ENCODE measurements at regions of chr10 and their contacts with region 1.

Region 1: DNA sequence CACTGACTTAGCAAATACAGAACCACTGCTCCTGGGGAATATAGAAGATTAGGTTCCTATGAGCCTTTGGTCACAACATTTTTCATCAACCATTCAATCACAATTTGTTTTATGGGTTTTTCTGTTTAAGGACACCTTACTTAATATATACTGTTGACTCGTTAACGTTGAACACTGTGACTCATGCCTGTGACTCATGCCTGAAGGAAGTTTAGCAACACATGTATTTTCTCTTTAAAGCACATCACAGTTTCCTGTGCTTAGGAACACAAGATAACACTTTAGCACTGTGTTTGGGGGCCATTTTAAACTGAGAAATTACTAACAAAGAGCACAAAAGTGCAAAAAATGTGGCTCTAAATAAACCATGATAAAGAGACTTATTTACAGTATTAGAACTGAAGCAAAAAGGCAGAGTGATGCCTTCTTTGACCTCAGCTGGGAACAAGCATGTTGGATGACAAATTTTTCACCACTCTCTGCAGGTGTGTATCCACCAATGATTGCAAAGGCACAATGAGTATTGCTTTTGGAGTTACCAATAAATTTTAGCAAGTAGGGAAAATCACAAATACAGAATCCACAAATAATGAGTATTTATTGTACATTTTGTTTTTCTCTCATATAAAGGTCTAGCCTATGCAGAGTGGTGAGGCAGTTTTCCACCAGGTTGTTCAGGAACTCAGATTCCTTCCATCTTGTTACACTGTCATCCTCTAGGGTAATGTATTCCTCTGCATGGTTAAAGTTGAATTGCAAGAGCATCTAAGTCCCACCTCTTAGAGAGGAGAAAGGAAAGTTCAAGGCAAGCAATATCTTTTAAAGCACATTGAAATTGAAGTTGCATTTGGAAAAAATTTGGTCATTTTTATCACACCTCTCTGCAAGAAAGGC is 7.3 kb downstream of the FGFBP3 start:
- DNase-seq: peak in 1 of 9 donors; percentile 15
- ATAC-seq: peak; percentile 98
- H3K4me3 ChIP-seq: no peak overlapping the region
- H3K4me3 Mint-ChIP-seq: peak overlapping the region in 2 of 10 donors; percentile 14 to 42
- H3K27ac ChIP-seq: no peak overlapping the region
- H3K27ac Mint-ChIP-seq: peak overlapping the region in 6 of 9 donors; percentile 39 to 90 (median 68)
- H3K4me1 ChIP-seq: peaks cover 0 to 14% of the 10 kb centered on the region in 2 donors
- H3K4me1 Mint-ChIP-seq: peaks cover 7 to 28% (median 12%) of the 10 kb centered on the region in 7 donors
- H3K27me3 ChIP-seq: no peaks in the 10 kb centered on the region
- H3K27me3 Mint-ChIP-seq: peaks cover 0 to 7% (median 2%) of the 10 kb centered on the region in 5 donors

Region 2: GRCh38 chr10:91875779-91876178 is 26.3 kb before region 1 on chr10:
- CTCF ChIA-PET with region 1: no interaction called
- POLR2A ChIA-PET with region 1: no interaction called
- intact Hi-C with region 1: no loop called
- DNase-seq: no peak
- ATAC-seq: no peak
- H3K4me3 ChIP-seq: no peak overlapping the region
- H3K4me3 Mint-ChIP-seq: no peak overlapping the region
- H3K27ac ChIP-seq: no peak overlapping the region
- H3K27ac Mint-ChIP-seq: no peak overlapping the region
- H3K4me1 ChIP-seq: no peaks in the 10 kb centered on the region
- H3K4me1 Mint-ChIP-seq: no peaks in the 10 kb centered on the region
- H3K27me3 ChIP-seq: no peaks in the 10 kb centered on the region
- H3K27me3 Mint-ChIP-seq: peaks cover 0 to 2% (median 0%) of the 10 kb centered on the region in 5 donors

Region 3: DNA sequence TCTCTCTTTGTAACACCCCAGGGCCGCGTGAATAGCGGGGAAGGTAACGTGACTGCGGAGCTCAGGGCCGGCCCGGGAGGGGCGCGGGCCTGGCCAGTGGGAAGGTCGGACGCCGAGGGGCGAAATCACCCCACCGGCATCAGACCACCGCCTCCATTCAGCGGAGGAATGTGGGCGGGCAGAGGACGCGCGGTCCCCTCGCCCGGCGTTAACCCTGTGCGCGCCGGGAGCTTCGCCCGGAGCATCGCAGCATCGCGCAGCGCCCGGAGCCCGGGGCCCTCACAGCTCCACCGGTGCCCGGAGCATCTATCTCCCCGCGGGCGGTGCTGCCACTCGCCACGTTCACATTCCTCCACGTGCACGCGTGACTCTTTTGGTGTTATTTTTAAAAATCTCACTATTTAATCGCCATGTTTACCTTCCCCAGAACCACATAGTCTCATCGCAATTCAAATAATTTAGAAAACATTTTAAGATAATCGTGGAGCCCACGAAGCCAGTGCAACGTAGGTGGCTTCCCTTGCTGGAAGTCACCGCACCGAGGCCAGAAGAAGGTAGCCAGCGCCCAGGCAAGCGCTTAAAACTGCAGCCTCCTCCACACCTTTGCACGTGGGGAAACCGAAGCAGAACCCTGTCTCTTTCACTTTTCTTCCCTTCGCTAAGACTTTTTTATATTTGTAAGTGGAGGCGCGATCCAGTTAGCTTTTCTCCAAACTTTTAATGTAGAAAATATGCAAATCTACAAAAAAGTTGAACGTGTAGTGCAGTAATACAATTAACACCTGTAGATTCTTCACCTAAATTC is 14.6 kb before region 1 on chr10:
- CTCF ChIA-PET with region 1: no interaction called
- POLR2A ChIA-PET with region 1: interaction called, 4 read pairs
- intact Hi-C with region 1: loop called in 1 of 2 experiments (anchors 1 kb)
- DNase-seq: peak in 6 of 9 donors; percentile 11 to 40 (median 22)
- ATAC-seq: peak; percentile 71
- H3K4me3 ChIP-seq: peak overlapping the region; percentile 45
- H3K4me3 Mint-ChIP-seq: peak overlapping the region; percentile 79 to 96 (median 91)
- H3K27ac ChIP-seq: peak overlapping the region; percentile 22
- H3K27ac Mint-ChIP-seq: peak overlapping the region in 6 of 9 donors; percentile 22 to 81 (median 64)
- H3K4me1 ChIP-seq: peaks cover 0 to 5% of the 10 kb centered on the region in 2 donors
- H3K4me1 Mint-ChIP-seq: peaks cover 0 to 16% (median 7%) of the 10 kb centered on the region in 7 donors
- H3K27me3 ChIP-seq: peaks cover 0 to 3% of the 10 kb centered on the region in 2 donors
- H3K27me3 Mint-ChIP-seq: peaks cover 6 to 57% (median 19%) of the 10 kb centered on the region in 5 donors